ENCODE measurements at regions of chr1 and their contacts with region 1.

Region 1: GRCh38 chr1:9267352-9267686 is 25.4 kb upstream of the SPSB1 start:
- DNase-seq: no peak
- H3K4me3 Mint-ChIP-seq: no peak overlapping the region
- H3K27ac Mint-ChIP-seq: no peak overlapping the region
- H3K4me1 Mint-ChIP-seq: peaks cover 5% of the 10 kb centered on the region
- H3K27me3 Mint-ChIP-seq: no peaks in the 10 kb centered on the region

Region 2: DNA sequence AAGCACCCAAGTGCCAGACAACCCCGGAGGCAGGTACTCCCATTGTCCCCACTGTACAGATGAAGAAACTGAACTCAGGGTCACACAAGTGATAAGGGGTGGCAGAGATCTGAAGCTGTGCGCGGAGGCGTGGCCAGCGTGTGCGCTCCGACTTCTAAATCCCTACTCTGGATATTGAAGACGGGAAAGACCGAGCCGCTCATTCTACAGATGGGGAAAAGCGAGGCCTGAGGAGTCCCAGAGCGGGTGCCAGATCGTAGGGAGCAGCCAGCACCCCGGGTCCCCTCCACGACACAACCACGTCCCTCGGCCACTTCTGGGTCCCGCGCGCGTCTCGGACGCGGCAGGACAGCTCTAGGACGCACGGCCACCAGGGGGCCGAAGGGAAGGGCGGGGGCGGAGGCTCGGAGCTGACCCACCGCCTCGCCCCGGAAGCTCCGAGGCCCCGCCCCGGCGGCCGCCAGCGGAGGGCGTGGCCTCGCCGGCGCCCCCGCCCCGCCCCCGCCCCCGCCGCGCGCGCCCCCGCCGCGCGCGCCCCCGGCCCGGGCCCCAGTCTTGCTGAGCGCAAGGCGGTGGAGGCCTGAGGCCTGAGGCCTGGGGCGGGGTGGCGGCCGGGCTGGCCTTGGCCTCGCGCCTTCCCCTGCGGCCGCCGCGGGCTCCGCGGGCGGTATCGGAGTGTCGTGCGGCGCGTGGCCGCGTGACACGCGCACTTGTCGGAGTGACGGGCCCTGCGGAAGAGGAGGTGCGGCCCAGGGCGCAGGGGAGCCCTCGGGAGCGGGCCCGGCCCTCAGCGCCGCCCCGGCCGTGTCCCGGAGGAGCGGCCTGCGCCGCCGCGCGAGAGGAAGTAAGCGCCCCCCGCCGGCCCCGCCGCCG is 32.9 kb before region 1 on chr1 and contains the start of gene H6PD:
- intact Hi-C with region 1: no loop called
- DNase-seq: peak; percentile 82
- H3K4me3 Mint-ChIP-seq: peak within 1 kb of the TSS; percentile 94
- H3K27ac Mint-ChIP-seq: peak within 1 kb of the TSS; percentile 98
- H3K4me1 Mint-ChIP-seq: peaks cover 36% of the 10 kb centered on the region
- H3K27me3 Mint-ChIP-seq: peaks cover 3% of the 10 kb centered on the region
- total RNA-seq, gene H6PD: 15.7 TPM in 2 replicates

Region 3: DNA sequence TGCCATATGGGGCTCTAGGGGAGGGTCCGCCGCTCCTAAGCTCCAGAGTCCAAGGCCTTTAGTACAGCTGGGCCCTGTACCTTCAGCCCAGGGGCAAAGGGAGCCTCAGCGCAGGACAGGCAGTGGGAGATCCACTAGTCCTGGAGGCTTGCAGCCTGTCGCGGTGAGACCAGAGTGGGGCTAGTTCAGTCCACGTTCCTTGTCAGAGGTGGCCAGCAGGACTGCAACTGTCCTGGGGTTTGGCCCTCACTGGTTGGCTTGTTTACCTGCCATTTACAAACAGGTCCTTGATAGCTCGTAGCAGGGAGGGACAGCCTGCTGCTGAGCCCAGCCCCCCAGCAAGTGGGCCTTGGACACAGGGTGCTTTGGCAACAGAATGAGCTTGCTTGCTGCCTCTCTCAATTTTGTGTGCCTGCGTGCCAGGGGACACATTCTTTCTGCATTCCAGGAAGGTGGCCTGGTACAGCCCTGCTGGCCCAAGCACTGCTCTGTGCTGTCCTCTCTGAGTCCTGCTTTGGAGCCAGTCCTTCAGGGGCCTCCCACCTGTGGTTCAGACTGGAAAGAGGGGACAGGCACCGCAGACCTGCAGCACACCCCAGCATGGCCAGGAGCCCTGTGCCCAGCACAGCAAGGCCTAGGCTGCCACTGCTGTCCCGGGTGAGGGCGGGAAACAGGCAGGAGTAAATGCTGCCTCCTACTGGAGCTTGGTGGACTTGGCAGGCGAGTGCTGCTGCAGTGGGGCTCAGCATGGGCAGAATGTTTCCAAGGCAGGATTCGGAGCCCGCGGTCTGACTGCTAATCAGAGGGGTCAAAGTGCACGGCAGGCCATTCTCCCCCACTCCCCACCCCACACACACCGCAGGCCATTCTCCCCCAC is 17.5 kb before region 1 on chr1:
- intact Hi-C with region 1: no loop called
- DNase-seq: peak; percentile 17
- H3K4me3 Mint-ChIP-seq: no peak overlapping the region
- H3K27ac Mint-ChIP-seq: no peak overlapping the region
- H3K4me1 Mint-ChIP-seq: peaks cover 21% of the 10 kb centered on the region
- H3K27me3 Mint-ChIP-seq: no peaks in the 10 kb centered on the region

Region 4: GRCh38 chr1:9455487-9456234 is 188.3 kb after region 1 on chr1:
- intact Hi-C with region 1: loop called (anchors 1 kb)
- DNase-seq: peak; percentile 21
- H3K4me3 Mint-ChIP-seq: no peak overlapping the region
- H3K27ac Mint-ChIP-seq: no peak overlapping the region
- H3K4me1 Mint-ChIP-seq: peaks cover 7% of the 10 kb centered on the region
- H3K27me3 Mint-ChIP-seq: peaks cover 14% of the 10 kb centered on the region